Activated T-helper 2 cell treated with anti-CD3 and anti-CD28 coated beads, Interferon-gamma antibody, Interleukin-2, Interleukin-4, amounts not matched to agents 10 μg/mL and 5 μg/mL and 100 μg/mL, durations not matched to agents 14 hours and 24 hours and 36 hours (primary cell): ENCODE measurements at regions of chr12 and their contacts with region 1.

Region 1: GRCh38 chr12:98593351-98594049 is at the start of gene SLC25A3:
- DNase-seq: peak; percentile 92
- H3K4me3 Mint-ChIP-seq: peak within 1 kb of the TSS; percentile 91
- H3K27ac Mint-ChIP-seq: peak within 1 kb of the TSS; percentile 93
- H3K4me1 Mint-ChIP-seq: peaks cover 23% of the 10 kb centered on the region
- H3K27me3 Mint-ChIP-seq: no peaks in the 10 kb centered on the region
- total RNA-seq, gene SLC25A3: 619 and 622 TPM in 2 replicates

Region 2: GRCh38 chr12:98280621-98281020 is 312.9 kb before region 1 on chr12:
- intact Hi-C with region 1: no loop called
- DNase-seq: no peak
- H3K4me3 Mint-ChIP-seq: no peak overlapping the region
- H3K27ac Mint-ChIP-seq: no peak overlapping the region
- H3K4me1 Mint-ChIP-seq: no peaks in the 10 kb centered on the region
- H3K27me3 Mint-ChIP-seq: peaks cover 3% of the 10 kb centered on the region

Region 3: DNA sequence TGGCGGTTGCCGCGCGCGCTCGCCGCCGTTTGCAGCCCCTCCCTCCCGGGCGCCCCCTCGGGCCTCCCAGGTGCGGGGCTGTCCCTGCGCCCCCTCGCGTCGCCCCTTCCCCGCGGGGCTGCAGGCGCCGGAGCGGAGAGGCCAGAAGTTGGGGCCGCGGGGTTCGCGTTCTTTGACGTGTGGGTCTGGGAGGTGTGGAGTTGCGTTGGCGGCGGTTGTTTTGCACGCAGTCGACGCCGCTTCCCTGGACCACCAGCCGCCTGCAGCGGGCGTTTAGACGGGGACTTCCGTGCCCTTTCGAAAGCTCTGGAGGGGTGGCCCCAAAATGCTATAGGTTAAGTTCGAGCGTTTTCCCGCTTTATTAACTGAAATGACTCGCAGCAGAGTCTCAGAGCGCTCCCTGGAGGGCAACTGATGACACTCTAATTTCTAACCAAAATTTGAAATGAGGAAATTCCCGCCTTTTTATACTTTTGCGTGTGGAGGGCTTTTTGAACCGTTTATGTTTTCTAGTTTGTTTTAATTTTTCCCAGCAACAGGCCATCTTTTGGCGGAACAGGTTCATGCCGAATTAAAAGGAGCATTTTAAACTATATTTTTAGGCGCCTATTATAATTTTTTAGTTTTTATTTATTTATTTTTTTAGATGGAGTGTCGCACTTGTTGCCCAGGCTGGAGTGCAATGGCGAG is 77.2 kb before region 1 on chr12:
- intact Hi-C with region 1: loop called (anchors 1 kb)
- DNase-seq: peak; percentile 83
- H3K4me3 Mint-ChIP-seq: peak overlapping the region; percentile 92
- H3K27ac Mint-ChIP-seq: peak overlapping the region; percentile 98
- H3K4me1 Mint-ChIP-seq: peaks cover 22% of the 10 kb centered on the region
- H3K27me3 Mint-ChIP-seq: no peaks in the 10 kb centered on the region

Region 4: GRCh38 chr12:98561846-98562245 is 31.7 kb before region 1 on chr12:
- intact Hi-C with region 1: loop called (anchors 1 kb)
- DNase-seq: no peak
- H3K4me3 Mint-ChIP-seq: no peak overlapping the region
- H3K27ac Mint-ChIP-seq: no peak overlapping the region
- H3K4me1 Mint-ChIP-seq: peaks cover 4% of the 10 kb centered on the region
- H3K27me3 Mint-ChIP-seq: no peaks in the 10 kb centered on the region

Region 5: GRCh38 chr12:98612696-98613334 is 19.3 kb after region 1 on chr12:
- intact Hi-C with region 1: loop called (anchors 2 kb)
- DNase-seq: no peak
- H3K4me3 Mint-ChIP-seq: no peak overlapping the region
- H3K27ac Mint-ChIP-seq: peak overlapping the region; percentile 74
- H3K4me1 Mint-ChIP-seq: peaks cover 7% of the 10 kb centered on the region
- H3K27me3 Mint-ChIP-seq: no peaks in the 10 kb centered on the region

Region 6: DNA sequence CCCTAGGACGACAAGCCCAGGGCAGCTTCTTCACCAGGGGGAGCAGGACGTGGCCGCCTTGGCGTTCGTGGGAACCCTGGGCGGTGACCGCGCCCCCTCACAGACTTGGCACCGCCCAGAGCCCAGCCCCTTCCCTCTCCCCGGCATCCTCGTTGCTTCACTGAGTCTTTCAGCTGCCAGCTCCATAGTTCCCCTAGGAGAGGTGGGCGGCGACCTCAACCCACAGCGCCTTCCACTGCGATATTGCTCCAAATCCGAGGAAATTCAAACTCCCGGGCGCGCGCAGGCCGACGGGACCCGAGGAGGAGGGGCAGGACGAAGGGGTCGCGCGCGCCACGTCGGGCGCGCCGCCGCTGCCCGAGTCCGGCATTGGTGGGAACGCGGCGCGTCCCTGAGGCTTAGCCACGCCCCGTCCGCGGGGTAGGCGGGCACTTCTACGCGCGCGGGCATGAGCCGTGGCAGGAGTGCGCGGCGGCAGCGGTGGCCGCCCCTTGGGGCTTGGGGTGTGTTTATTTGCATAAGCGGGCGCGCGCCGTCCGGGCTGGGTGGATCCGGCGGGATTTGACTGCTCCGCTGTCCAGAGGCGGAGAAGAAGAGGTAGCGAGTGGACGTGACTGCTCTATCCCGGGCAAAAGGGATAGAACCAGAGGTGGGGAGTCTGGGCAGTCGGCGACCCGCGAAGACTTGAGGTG is 51.4 kb after region 1 on chr12 and contains the starts of genes APAF1 and IKBIP:
- intact Hi-C with region 1: loop called (anchors 1 kb)
- DNase-seq: peak; percentile 94
- H3K4me3 Mint-ChIP-seq: peak within 1 kb of the TSS; percentile 97
- H3K27ac Mint-ChIP-seq: peak within 1 kb of the TSS; percentile 98
- H3K4me1 Mint-ChIP-seq: peaks cover 32% of the 10 kb centered on the region
- H3K27me3 Mint-ChIP-seq: no peaks in the 10 kb centered on the region
- total RNA-seq, gene APAF1: 28.3 and 31.2 TPM in 2 replicates
- total RNA-seq, gene IKBIP: 39.9 and 41.1 TPM in 2 replicates

Region 7: DNA sequence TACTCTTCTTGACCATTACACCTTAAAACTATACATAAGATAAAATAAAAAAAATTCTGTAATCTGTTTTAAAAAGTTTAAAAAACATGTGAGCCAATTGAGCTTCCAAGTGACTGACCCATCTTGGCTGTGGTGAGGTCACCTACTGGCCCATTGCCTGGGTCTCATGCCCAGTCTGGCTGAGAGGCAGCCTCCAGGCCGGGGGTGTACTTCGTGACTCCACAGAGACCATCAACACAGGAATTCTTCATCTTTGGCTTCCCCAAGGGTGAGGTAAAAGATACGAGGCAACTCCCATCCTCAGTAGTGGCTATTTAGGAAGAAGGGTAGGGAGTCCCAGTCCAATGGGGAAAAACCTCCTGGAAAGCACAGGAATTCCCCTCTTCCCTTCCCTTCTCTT is 164.8 kb after region 1 on chr12:
- intact Hi-C with region 1: no loop called
- DNase-seq: no peak
- H3K4me3 Mint-ChIP-seq: no peak overlapping the region
- H3K27ac Mint-ChIP-seq: no peak overlapping the region
- H3K4me1 Mint-ChIP-seq: peaks cover 22% of the 10 kb centered on the region
- H3K27me3 Mint-ChIP-seq: peaks cover 7% of the 10 kb centered on the region